Activated CD8-positive, alpha-beta memory T cell treated with anti-CD3 and anti-CD28 coated beads, Interleukin-2, amount 10 ng/mL, durations not matched to agents 7 days and 5 days (primary cell): ENCODE measurements at regions of chr5 and their contacts with region 1.

Region 1: DNA sequence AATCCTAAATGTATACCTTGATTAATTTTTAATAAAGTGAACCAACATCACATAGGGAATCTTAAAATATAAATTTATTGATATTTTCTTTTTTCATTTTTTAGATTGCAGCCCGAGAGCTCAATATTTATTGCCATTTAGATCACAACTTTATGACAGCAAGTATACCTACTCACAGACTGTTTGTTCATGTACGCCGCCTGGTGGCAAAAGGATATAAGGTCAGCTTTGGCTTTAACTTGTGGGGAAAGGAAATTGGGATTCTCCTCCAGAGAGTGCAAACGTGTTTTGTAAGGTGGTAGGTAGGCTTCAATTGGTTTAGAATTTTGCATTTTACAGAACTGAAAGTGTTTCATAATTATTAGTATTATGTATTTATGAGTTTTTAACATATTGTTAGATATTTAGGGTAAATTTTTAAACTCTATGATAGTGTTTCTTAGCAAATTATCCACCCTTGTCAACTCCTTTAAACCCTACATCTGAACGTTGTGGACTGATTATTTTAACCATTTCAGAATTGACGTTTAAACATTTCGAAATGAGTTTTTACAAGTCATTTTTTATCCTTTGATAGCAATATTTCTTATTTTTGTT is 17.5 kb upstream of the DHFR start:
- DNase-seq: peak; percentile 82
- ATAC-seq: peak; percentile 83
- H3K4me3 Mint-ChIP-seq: no peak overlapping the region
- H3K27ac Mint-ChIP-seq: no peak overlapping the region
- H3K4me1 Mint-ChIP-seq: peaks cover 19% of the 10 kb centered on the region
- H3K27me3 Mint-ChIP-seq: no peaks in the 10 kb centered on the region

Region 2: DNA sequence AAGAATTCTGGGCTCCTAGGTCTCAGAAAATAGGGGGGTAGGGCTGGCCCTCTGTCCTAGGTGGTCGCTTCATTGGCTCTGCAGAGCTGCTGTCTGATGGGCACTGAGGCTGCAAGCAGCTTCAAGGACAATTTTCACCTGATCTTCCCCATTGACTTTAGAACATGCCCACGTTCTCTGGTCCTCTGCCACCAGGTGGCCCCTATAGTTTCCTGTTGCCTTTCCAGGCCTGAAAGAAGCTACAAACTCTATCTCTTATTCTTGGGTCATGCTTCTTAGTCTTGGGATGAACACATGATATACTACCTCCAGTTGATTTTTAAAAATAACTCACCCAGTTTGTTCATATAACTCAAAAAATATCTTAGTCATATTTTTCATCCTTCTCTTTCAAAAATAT is 326.2 kb before region 1 on chr5:
- CTCF ChIA-PET with region 1: interaction called, 13 read pairs
- DNase-seq: peak; percentile 57
- ATAC-seq: peak; percentile 47
- H3K4me3 Mint-ChIP-seq: no peak overlapping the region
- H3K27ac Mint-ChIP-seq: no peak overlapping the region
- H3K4me1 Mint-ChIP-seq: peaks cover 3% of the 10 kb centered on the region
- H3K27me3 Mint-ChIP-seq: peaks cover 9% of the 10 kb centered on the region

Region 3: DNA sequence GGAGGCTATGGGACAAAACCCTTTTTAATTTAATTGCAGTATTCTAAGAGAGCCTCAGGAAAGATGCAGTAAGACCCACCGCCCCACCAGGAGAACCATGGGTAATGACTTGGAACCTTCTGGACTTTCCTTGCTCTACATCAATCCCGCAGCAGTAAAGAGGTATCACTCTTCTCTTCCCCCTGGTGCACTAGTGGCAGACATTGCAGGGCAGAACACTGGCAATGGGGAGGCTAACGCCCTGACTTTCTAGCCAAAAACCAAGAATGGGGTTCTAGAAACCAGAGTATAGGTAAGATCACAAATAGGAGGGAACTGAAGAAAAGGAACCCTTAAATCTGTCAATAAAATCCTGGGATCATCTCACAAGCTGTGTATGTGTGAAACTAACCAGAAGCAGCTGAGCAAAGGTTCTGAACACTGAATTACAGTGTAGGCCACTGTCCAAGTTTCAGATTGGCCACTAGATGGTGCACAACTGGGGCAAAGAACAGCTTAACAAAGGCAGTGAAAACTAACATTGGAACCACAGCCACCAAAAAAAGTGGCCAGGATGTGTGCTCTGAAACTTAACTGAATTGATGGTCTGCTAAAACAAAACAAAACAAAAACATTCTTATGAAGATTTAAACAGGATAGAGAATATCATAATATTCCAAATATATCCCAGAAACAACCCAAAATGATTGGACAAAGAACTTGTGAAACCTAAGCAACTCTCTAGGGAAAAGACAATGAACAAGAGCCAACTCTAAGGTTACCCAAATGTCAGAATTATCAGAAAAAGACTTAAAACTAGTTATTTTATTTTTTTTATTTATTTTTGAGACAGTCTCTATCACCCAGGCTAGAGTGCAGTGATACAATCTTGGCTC is 191.0 kb before region 1 on chr5:
- CTCF ChIA-PET with region 1: interaction called, 13 read pairs
- DNase-seq: peak; percentile 70
- ATAC-seq: peak; percentile 70
- H3K4me3 Mint-ChIP-seq: no peak overlapping the region
- H3K27ac Mint-ChIP-seq: no peak overlapping the region
- H3K4me1 Mint-ChIP-seq: peaks cover 4% of the 10 kb centered on the region
- H3K27me3 Mint-ChIP-seq: peaks cover 15% of the 10 kb centered on the region

Region 4: DNA sequence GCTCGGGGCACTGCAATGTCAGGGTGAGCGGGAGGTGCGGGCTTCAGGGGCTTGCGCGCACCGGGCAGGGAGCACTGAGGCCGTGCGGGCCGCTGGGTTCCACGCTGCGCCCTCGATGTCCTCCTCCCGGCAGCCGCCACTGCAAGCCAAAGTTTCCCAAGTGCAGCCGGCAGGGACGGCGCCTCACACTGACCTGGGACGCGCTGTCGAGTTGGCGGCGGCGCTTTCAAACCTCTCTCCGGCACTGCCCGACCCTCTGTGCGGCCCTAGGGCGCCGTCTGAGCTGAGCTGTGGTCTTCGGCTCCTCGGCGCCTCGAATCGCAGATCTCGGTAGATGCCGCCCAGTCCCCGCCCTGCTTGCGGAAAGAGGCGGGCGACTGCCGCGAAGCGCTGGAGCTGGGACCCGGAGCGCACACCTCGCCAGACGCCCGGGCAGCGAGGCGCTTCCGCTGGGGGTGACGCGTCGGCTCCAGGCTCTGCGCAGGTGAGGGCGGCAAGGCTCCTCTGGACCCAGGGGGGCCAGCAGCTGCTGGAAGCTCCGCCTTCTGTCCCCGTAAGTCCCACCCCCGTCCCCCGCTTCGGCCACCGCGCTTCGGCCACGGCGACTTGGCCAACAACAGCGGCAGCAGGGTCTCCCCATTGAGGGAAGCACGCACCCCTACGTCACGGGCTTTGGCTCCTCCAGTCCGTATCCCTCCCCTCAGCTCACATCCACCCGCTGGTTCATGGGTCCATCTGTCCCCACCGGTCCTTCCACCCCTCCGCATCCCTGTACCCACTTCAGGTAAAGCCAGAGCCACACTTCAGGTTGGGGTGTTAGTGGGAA is 102.1 kb before region 1 on chr5 and contains the start of gene ANKRD34B:
- CTCF ChIA-PET with region 1: no interaction called
- DNase-seq: peak; percentile 57
- ATAC-seq: peak; percentile 82
- H3K4me3 Mint-ChIP-seq: peak within 1 kb of the TSS; percentile 36
- H3K27ac Mint-ChIP-seq: no peak within 1 kb of the TSS
- H3K4me1 Mint-ChIP-seq: peaks cover 5% of the 10 kb centered on the region
- H3K27me3 Mint-ChIP-seq: peaks cover 81% of the 10 kb centered on the region
- total RNA-seq, gene ANKRD34B: not detected

Region 5: GRCh38 chr5:80641353-80641752 is 30.9 kb before region 1 on chr5:
- CTCF ChIA-PET with region 1: no interaction called
- DNase-seq: no peak
- ATAC-seq: no peak
- H3K4me3 Mint-ChIP-seq: no peak overlapping the region
- H3K27ac Mint-ChIP-seq: no peak overlapping the region
- H3K4me1 Mint-ChIP-seq: peaks cover 15% of the 10 kb centered on the region
- H3K27me3 Mint-ChIP-seq: no peaks in the 10 kb centered on the region

Region 6: GRCh38 chr5:80654391-80655230 is 17.6 kb before region 1 on chr5 and contains the starts of genes DHFR and MSH3:
- CTCF ChIA-PET with region 1: interaction called, 38 read pairs
- DNase-seq: peak; percentile 94
- ATAC-seq: peak; percentile 60
- H3K4me3 Mint-ChIP-seq: peak within 1 kb of the TSS; percentile 94
- H3K27ac Mint-ChIP-seq: peak within 1 kb of the TSS; percentile 98
- H3K4me1 Mint-ChIP-seq: peaks cover 25% of the 10 kb centered on the region
- H3K27me3 Mint-ChIP-seq: no peaks in the 10 kb centered on the region
- total RNA-seq, gene DHFR: 72.0 to 76.9 TPM
- total RNA-seq, gene MSH3: 22.3 to 26.3 TPM

Region 7: DNA sequence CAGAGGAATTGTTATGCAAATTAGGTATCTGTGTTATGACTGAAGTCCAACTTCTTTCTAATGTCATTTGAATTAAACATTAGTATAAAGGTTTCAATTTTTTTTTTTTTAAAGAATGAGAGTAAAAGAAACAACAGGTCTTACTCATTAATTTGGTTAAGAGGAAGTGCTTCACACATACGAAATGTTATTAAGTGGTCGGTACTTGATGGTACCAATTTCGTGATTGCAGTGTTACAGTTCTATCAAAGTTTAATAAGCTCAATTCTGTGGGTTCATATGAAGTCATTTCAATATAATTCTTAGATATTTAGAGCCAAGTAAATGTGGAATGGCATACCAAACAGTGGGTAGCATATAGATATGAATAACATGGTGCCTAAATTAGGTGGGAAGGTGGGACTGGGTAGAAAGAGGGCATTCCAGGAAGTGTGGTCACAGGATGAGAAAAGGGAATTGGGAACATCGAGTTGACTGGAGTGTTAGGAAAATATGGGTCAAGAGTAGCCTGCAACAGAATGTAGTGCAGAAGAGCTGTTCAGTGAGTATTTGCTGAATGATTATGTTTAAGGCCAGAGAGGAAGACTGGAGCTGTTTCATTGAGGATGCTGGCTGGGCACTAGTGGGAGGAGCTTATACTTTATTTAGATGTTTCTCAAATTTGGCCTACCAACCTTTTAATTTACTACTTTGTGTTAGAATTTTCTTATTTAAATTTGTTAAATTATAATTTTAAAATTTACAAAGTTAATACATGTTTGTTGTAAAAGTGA is 16.6 kb after region 1 on chr5:
- CTCF ChIA-PET with region 1: no interaction called
- DNase-seq: no peak
- ATAC-seq: no peak
- H3K4me3 Mint-ChIP-seq: no peak overlapping the region
- H3K27ac Mint-ChIP-seq: no peak overlapping the region
- H3K4me1 Mint-ChIP-seq: peaks cover 24% of the 10 kb centered on the region
- H3K27me3 Mint-ChIP-seq: no peaks in the 10 kb centered on the region